IMR-90 (cell line): ENCODE measurements at regions of chr1 and their contacts with region 1.

Region 1: GRCh38 chr1:94169126-94169525 is 48.2 kb upstream of the ABCA4 start:
- DNase-seq: no peak
- ATAC-seq: no peak
- H3K4me3 ChIP-seq: no peak overlapping the region
- H3K27ac ChIP-seq: no peak overlapping the region
- H3K4me1 ChIP-seq: no peaks in the 10 kb centered on the region
- H3K27me3 ChIP-seq: no peaks in the 10 kb centered on the region
- CTCF ChIP-seq: no peak
- POLR2A ChIP-seq: no peak
- RAD21 ChIP-seq: no peak

Region 2: DNA sequence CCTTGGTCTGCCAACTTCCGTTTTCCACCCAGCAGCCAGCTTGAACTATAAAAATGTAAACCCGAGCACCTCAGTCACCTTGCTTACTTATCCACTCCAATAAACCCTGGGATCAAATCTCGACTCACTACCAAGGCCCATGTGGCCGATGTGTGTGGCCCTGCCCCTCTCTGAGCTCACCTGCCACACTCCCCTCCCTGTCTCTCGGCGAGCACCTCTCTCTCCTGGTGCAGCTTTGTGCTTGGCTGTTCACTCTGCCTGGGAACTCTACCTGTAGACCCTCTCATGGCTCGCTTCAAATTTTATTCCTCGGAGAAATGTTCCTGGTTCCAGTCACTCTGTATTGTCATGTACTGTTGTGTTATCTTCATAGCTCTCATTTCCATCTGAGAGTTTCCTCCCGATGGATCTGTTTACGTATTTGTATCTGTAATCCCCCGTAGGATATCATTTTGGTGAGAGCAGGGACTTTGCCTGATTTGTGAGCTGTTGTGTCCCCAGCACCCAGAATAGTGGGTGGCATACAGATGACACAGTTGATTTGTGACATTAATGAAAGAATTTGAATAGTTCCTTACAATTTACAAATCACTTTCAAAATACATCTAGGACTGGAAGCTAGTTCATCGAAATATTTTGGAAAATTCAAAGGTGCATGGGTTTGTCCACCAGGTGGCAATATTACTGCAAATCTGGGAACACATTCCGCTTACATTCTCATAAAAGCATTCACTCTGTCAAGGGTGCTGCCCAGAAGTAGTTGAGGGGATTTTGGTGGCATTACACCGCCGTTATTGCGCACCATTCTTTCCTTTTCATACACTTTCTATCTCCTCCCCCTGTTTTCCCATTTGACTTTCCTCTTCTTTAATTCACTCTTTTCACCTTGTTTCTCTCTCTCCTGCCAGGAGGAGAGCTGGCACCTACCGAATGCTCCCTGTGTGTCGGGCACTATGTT is 143.5 kb before region 1 on chr1:
- CTCF ChIA-PET with region 1: no interaction called
- POLR2A ChIA-PET with region 1: no interaction called
- dilution Hi-C with region 1: no loop called
- in situ Hi-C with region 1: no loop called
- intact Hi-C with region 1: no loop called
- DNase-seq: peak; percentile 79
- ATAC-seq: peak; percentile 50
- H3K4me3 ChIP-seq: no peak overlapping the region
- H3K27ac ChIP-seq: no peak overlapping the region
- H3K4me1 ChIP-seq: peaks cover 15% of the 10 kb centered on the region
- H3K27me3 ChIP-seq: no peaks in the 10 kb centered on the region
- CTCF ChIP-seq: peak; percentile 83
- POLR2A ChIP-seq: no peak
- RAD21 ChIP-seq: peak; percentile 81

Region 3: GRCh38 chr1:94154989-94155388 is 14.1 kb before region 1 on chr1:
- CTCF ChIA-PET with region 1: no interaction called
- POLR2A ChIA-PET with region 1: no interaction called
- dilution Hi-C with region 1: no loop called
- in situ Hi-C with region 1: no loop called
- intact Hi-C with region 1: loop called (anchors 1 kb)
- DNase-seq: no peak
- ATAC-seq: no peak
- H3K4me3 ChIP-seq: no peak overlapping the region
- H3K27ac ChIP-seq: no peak overlapping the region
- H3K4me1 ChIP-seq: no peaks in the 10 kb centered on the region
- H3K27me3 ChIP-seq: no peaks in the 10 kb centered on the region
- CTCF ChIP-seq: no peak
- POLR2A ChIP-seq: no peak
- RAD21 ChIP-seq: no peak